Heart left ventricle (tissue), 16 donors: ENCODE measurements at regions of chr1 and their contacts with region 1.

Region 1: DNA sequence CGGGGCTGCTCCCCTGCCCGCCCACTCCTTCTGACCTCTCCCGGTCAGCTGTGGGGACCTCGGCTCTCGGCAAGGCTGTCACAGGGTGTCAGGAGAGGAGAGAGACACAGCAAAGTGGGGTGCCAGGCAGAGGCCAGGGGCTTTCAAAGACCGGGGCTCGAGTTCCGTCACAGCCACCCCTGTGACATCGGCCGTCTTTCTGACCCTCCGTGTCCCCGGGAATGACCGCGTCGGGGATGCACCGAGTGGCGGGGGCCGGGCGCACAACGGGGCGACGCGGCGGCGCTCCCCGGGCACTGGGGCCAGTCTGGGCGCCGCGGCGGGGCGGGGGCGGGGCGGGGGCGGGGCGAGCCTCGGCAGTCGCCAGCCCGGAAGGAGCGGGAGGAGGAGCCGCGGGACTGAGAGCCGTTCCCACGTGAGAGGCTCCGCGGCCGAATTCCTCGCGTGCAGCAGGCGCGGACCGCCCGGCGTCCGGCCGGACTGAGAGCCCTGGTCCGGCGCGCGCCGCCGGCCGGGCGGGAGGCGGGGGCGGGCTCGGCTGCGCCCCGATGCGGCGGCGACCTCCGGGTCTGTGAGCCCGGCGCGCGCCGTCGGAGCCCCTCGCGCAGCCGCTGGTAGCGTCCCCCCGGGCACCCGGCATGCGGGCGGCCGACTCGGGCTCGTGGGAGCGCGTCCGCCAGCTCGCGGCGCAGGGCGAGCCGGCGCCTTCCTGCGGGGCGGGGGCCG is 229.7 kb upstream of the TMEM51 start:
- DNase-seq: peak; percentile 75 to 85 (median 79)
- ATAC-seq: peak in 3 of 4 donors; percentile 73 to 84 (median 77)
- H3K4me3 ChIP-seq: peak overlapping the region in 9 of 12 donors; percentile 15 to 91 (median 70)
- H3K27ac ChIP-seq: peak overlapping the region in 4 of 12 donors; percentile 23 to 66 (median 43)
- H3K4me1 ChIP-seq: peaks cover 0 to 23% (median 13%) of the 10 kb centered on the region in 12 donors
- H3K27me3 ChIP-seq: peaks cover 0 to 32% (median 4%) of the 10 kb centered on the region in 9 donors
- CTCF ChIP-seq: no peak
- POLR2A ChIP-seq: no peak

Region 2: DNA sequence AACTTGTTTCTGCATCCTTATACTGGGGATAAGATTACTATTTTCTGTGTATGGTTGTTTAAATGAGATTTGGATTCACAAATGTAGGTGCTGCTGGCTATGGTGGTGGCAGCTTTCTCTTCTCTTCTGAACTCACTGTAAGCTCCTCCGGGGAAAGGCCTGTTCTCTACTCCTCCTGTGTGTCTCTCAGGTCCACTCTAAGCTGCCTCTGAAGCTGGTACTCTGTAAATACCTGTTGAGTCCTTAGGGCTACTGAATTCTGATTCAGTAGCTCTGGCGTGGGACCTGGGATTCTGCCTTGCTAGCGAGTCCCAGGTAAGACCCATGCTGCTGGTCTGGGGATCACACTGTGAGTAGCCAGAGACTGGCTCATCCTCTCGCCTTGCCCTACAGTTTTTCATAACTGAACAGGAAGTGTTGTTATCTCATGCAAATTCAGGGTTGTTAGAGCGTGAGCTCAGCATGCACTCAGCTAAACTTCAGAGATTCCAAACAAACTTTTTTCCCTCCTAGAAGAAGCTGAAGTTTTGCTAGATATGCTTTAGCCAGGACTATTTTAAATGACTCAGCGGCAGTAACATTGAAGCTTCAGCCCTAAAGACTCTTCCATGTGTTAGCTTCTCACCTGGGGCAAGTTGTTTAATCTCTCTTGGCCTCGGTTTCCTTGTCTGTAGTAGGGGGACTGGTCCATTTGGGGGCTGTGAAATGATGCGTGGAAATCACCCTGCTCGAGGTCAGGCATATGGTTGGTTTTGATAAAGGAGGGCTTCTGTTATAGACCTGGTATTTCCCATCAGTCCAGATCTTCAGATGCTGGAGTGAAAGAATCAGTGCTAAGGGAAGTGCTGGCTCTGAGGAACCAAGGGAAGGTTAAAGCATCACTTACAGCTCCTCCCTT is 41.9 kb before region 1 on chr1:
- intact Hi-C with region 1: no loop called
- DNase-seq: no peak
- ATAC-seq: no peak
- H3K4me3 ChIP-seq: no peak overlapping the region
- H3K27ac ChIP-seq: no peak overlapping the region
- H3K4me1 ChIP-seq: no peaks in the 10 kb centered on the region
- H3K27me3 ChIP-seq: peaks cover 0 to 22% (median 0%) of the 10 kb centered on the region in 9 donors
- CTCF ChIP-seq: no peak
- POLR2A ChIP-seq: no peak

Region 3: GRCh38 chr1:15021065-15021745 is 97.3 kb after region 1 on chr1:
- intact Hi-C with region 1: loop called in 8 of 10 experiments (anchors 2 to 5 kb)
- DNase-seq: peak in 4 of 5 donors; percentile 53 to 67 (median 60)
- ATAC-seq: peak; percentile 63 to 90 (median 73)
- H3K4me3 ChIP-seq: no peak overlapping the region
- H3K27ac ChIP-seq: peak overlapping the region in 9 of 12 donors; percentile 17 to 68 (median 47)
- H3K4me1 ChIP-seq: peaks cover 0 to 23% (median 7%) of the 10 kb centered on the region in 12 donors
- H3K27me3 ChIP-seq: no peaks in the 10 kb centered on the region
- CTCF ChIP-seq: no peak
- POLR2A ChIP-seq: no peak